Panc1 (cell line): ENCODE measurements at regions of chr4 and their contacts with region 1.

Region 1: DNA sequence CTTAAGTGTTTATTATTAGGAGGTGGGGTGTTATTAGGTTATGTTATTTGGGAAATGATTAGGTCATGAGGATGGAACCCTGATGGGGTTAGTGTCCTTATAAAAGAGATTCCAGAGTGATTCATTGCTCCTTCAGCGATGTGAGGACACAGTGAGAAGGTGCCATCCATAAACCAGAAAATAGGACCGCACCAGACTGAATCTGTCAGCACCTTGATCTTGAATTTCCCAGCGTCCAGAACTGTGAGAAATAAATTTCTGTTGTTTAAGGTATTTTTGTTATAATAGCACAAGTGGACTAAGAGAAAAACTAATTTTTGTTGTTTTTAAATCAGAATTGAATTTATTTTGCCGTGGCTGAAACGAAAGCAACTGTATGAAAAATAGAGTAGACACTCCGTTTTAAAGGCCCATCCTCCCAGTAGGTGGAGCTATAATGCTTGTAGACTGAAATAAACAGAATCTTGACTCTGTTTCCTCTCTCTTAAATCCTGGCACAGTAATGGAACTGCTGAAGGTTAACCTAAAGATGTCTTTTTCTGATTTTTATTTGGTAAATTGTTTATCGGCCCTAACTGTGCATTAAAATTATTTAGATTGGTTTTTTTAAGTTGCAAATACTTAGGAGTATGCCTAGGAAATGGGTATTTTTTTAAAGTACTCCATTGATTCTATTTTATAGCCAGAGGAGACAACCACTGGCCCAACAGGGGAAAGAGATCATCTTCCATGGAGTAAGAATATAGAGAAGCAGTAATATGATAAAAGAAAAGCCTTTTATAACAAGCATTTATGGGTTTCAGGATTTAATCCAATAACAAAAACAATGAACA is 133.2 kb upstream of the ADAMTS3 start:
- DNase-seq: peak; percentile 7
- ATAC-seq: no peak
- H3K4me3 ChIP-seq: peak overlapping the region; percentile 2 to 24; a peak in 3 of 4 replicates
- H3K27ac ChIP-seq: no peak overlapping the region
- H3K4me1 ChIP-seq: no peaks in the 10 kb centered on the region
- H3K27me3 ChIP-seq: no peaks in the 10 kb centered on the region
- CTCF ChIP-seq: peak; percentile 54; the same call in 1 of the 2 replicates

Region 2: GRCh38 chr4:72505314-72505744 is 196.9 kb before region 1 on chr4:
- CTCF ChIA-PET with region 1: no interaction called
- POLR2A ChIA-PET with region 1: no interaction called
- in situ Hi-C with region 1: no loop called
- intact Hi-C with region 1: loop called (anchors 10 kb)
- DNase-seq: peak; percentile 17
- ATAC-seq: no peak
- H3K4me3 ChIP-seq: no peak overlapping the region
- H3K27ac ChIP-seq: no peak overlapping the region
- H3K4me1 ChIP-seq: no peaks in the 10 kb centered on the region
- H3K27me3 ChIP-seq: no peaks in the 10 kb centered on the region
- CTCF ChIP-seq: peak; percentile 60

Region 3: GRCh38 chr4:73019462-73020047 is 317.4 kb after region 1 on chr4:
- CTCF ChIA-PET with region 1: no interaction called
- POLR2A ChIA-PET with region 1: no interaction called
- in situ Hi-C with region 1: no loop called
- intact Hi-C with region 1: loop called (anchors 1 kb)
- DNase-seq: peak; percentile 27
- ATAC-seq: no peak
- H3K4me3 ChIP-seq: no peak overlapping the region
- H3K27ac ChIP-seq: no peak overlapping the region
- H3K4me1 ChIP-seq: no peaks in the 10 kb centered on the region
- H3K27me3 ChIP-seq: no peaks in the 10 kb centered on the region
- CTCF ChIP-seq: peak; percentile 56; the same call in 1 of the 2 replicates

Region 4: DNA sequence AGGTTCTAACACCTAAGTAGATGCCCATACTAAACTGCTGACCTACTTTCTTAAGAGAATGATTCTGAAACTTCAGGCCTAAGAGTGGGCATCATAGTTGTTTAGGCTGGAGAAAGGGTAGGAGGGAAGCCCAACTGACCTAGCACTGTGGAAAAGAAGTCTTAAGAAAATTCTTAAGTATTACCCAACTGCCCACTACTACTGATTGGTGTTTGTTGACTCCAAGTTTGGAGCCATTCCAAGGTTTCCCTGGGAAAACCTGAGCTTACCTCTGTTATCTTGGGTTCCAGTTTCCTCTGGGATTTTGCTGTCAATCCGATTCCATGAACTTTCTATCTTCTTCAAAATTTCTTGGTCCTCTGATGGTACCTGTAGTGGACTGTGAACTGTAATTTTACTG is 532.5 kb after region 1 on chr4:
- CTCF ChIA-PET with region 1: no interaction called
- POLR2A ChIA-PET with region 1: no interaction called
- in situ Hi-C with region 1: no loop called
- intact Hi-C with region 1: no loop called
- DNase-seq: no peak
- ATAC-seq: no peak
- H3K4me3 ChIP-seq: no peak overlapping the region
- H3K27ac ChIP-seq: no peak overlapping the region
- H3K4me1 ChIP-seq: no peaks in the 10 kb centered on the region
- H3K27me3 ChIP-seq: no peaks in the 10 kb centered on the region
- CTCF ChIP-seq: no peak